Activated T-helper 1 cell treated with anti-CD3 and anti-CD28 coated beads, Interleukin-12 subunit alpha, Interleukin-12 subunit beta, Interleukin-2, Interleukin-4 antibody, amounts not matched to agents 30 ng/mL and 10 ng/mL and 1 ng/mL, durations not matched to agents 14 hours and 24 hours and 36 hours (primary cell): ENCODE measurements at regions of chr17 and their contacts with region 1.

Region 1: DNA sequence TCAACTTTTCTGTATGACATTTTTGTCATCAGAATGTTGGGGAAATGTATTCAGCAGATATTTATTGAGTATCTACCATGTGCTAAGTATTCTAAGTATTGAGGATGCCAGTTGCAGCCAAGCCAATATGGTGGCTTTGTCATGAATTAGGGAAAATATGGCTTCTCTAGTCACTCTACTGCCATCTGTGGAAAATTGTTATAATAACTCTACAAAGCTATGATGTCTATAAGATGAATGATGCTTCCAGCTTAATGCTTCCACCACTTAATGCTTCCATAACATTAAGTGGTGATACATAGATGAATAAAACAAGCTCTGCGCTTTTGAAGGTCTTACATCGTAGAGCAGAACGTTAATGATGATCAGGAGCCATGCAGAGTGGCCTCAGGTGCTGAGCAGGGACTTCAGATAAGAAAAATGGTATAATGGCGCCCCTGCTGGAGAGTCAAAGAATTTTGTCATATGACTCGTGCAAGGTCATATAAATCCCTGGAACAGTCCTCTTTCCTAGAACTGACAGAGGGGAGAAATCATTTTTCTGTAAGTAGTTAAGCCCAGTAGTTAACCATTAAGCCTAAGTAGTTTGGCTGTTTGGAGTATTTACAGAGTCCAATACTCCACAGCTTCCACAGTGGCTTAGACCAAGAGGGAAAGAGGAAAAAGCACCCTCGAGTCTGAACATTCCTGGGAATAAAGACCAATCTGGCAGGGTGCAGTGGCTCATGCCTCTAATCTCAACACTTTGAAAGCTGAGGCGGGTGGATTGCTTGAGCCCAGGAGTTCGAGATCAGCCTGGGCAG is 2.7 kb upstream of the TMIGD1 start:
- DNase-seq: peak; percentile 47
- H3K4me3 Mint-ChIP-seq: no peak overlapping the region
- H3K27ac Mint-ChIP-seq: no peak overlapping the region
- H3K4me1 Mint-ChIP-seq: peaks cover 42% of the 10 kb centered on the region
- H3K27me3 Mint-ChIP-seq: peaks cover 3% of the 10 kb centered on the region

Region 2: DNA sequence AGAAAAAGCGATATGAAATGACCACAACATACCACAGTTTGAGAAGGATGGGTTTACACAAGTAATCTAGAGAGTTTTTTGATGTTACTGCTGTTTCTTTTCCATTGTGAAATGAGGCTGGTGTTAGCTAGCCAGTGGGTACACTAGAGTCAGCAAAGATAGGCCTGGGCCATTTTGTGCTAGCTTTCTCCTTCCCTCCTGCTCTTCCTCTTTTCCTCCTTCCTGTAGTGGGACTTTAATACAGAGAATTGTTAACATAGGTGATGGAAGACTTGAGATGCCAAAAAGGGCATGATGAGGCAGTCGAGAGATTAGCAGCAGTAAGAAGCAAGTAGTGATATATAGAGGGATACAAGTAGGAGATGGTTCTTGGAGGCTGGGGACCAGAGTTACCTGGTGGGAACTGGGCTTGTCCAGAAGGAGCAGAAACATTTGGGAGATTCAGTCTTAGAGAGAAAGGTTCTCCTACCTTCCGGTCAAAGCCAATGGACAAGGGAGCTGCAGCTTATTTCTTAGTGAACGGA is 212.2 kb before region 1 on chr17:
- intact Hi-C with region 1: loop called (anchors 1 kb)
- DNase-seq: no peak
- H3K4me3 Mint-ChIP-seq: no peak overlapping the region
- H3K27ac Mint-ChIP-seq: no peak overlapping the region
- H3K4me1 Mint-ChIP-seq: peaks cover 33% of the 10 kb centered on the region
- H3K27me3 Mint-ChIP-seq: no peaks in the 10 kb centered on the region

Region 3: DNA sequence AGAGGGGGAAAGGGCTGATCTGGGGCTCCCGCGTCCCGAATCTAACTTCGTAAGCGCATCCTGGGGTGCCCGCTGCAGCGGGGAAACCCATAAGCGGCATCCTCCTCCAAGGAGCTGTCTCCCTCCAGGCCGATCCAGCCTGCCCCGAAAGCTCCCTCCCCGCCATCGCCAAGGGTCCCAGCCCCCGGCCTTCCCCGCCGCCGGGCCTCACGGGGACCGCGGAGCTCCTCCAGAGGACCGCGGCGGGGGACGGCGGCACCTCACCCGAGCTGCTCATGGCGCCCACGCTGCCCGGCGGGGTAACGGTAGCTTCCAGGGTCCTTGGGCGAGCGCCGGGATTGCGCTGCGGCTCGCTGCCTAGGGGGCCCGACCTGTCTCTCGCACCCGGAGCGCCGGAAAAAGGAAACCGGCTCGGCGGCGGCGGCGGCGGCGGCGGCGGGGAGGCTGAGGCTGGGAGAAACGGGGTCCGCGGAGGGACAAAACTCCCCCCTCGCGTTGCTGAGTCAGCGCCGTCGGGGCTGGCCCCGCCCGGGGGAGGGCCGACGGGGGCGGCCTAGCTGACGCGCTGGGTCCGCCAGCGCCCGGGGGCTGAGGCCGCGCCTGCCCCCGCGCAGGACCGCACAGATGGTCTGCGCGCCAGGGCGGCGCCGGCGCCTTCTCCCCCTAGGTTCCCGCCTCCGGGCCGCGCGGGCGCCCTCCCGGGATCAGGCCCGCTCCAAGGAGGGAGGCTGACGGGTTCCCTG is 44.9 kb before region 1 on chr17 and contains the start of gene BLMH:
- intact Hi-C with region 1: loop called (anchors 1 kb)
- DNase-seq: peak; percentile 80
- H3K4me3 Mint-ChIP-seq: peak within 1 kb of the TSS; percentile 97
- H3K27ac Mint-ChIP-seq: peak within 1 kb of the TSS; percentile 90
- H3K4me1 Mint-ChIP-seq: peaks cover 13% of the 10 kb centered on the region
- H3K27me3 Mint-ChIP-seq: no peaks in the 10 kb centered on the region
- total RNA-seq, gene BLMH: 64.8 and 64.9 TPM in 2 replicates

Region 4: GRCh38 chr17:30378824-30379302 is 42.3 kb after region 1 on chr17 and contains the start of gene CPD:
- intact Hi-C with region 1: loop called (anchors 1 kb)
- DNase-seq: peak; percentile 97
- H3K4me3 Mint-ChIP-seq: peak within 1 kb of the TSS; percentile 92
- H3K27ac Mint-ChIP-seq: peak within 1 kb of the TSS; percentile 97
- H3K4me1 Mint-ChIP-seq: peaks cover 67% of the 10 kb centered on the region
- H3K27me3 Mint-ChIP-seq: no peaks in the 10 kb centered on the region
- total RNA-seq, gene CPD: 29.7 and 35.3 TPM in 2 replicates

Region 5: GRCh38 chr17:30477083-30477773 is 140.7 kb after region 1 on chr17 and contains the start of gene GOSR1:
- intact Hi-C with region 1: loop called (anchors 2 kb)
- DNase-seq: peak; percentile 87
- H3K4me3 Mint-ChIP-seq: peak within 1 kb of the TSS; percentile 98
- H3K27ac Mint-ChIP-seq: peak within 1 kb of the TSS; percentile 98
- H3K4me1 Mint-ChIP-seq: peaks cover 34% of the 10 kb centered on the region
- H3K27me3 Mint-ChIP-seq: no peaks in the 10 kb centered on the region
- total RNA-seq, gene GOSR1: 61.5 and 66.6 TPM in 2 replicates